ENCODE measurements at regions of chr1 and their contacts with region 1.

Region 1: GRCh38 chr1:88922214-88922613 is 30.8 kb upstream of the GTF2B start:
- DNase-seq: no peak
- H3K4me3 ChIP-seq: no peak overlapping the region
- H3K27ac ChIP-seq: no peak overlapping the region
- H3K4me1 ChIP-seq: no peaks in the 10 kb centered on the region
- H3K27me3 ChIP-seq: no peaks in the 10 kb centered on the region
- CTCF ChIP-seq: no peak
- EP300 ChIP-seq: no peak
- POLR2A ChIP-seq: no peak

Region 2: DNA sequence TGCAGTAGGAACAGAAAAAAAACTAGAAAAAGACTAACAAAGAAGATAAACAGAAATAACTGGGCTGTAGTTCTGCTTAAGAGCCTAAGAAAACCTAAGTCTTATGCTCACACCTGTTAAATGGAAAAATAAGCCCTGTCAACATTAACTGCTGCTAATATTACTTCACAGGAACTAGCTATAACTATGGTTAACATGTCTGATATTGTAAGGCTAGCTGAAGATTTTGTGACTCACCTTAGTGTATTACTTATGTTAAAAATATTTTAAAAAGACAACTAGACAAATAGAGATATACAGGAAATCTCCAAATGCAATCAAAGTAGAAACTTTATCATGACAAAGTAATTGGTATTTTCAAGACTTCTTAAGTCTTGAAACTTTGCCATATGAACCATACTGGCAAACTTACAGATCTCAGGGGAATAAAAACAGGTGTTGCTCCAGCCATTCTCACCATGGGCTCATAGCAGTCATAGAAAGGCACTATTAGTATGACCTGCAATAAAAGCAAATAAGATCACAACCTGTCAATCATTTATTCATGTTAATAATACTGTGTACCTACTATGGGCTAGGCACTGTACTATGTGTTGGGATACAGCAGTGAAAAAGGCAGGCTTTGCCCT is 39.5 kb after region 1 on chr1:
- intact Hi-C with region 1: loop called in 1 of 4 experiments (anchors 1 kb)
- DNase-seq: no peak
- H3K4me3 ChIP-seq: no peak overlapping the region
- H3K27ac ChIP-seq: no peak overlapping the region
- H3K4me1 ChIP-seq: no peaks in the 10 kb centered on the region
- H3K27me3 ChIP-seq: no peaks in the 10 kb centered on the region
- CTCF ChIP-seq: no peak
- EP300 ChIP-seq: no peak
- POLR2A ChIP-seq: no peak

Measured in ovary (tissue), 10 donors.